Body of pancreas (tissue), 4 donors: ENCODE measurements at regions of chr12 and their contacts with region 1.

Region 1: DNA sequence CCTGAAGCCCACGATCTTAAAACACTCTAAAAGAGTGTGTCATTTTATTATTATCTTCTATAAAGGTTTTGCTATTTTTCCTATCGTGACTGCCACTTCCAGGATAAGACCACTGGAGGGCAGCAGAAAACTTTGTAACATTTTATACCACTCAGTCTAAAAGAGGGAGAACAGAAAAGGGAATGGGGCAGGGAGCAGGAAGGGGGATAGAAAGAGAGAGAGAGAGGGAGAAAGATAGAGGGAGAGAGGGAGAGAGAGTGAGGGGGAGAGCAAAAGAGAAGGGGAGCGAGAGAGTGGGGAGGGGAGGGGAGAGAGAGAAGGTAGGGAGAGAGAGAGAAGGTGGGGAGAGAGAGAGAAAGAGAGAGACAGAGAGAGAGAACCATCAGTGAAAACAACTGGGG is 2.0 kb upstream of the ART4 start:
- DNase-seq: peak; percentile 59 to 75 (median 68)
- ATAC-seq: peak; percentile 63
- H3K4me3 ChIP-seq: no peak overlapping the region
- H3K27ac ChIP-seq: peak overlapping the region in 2 of 4 donors; percentile 39 to 71
- H3K4me1 ChIP-seq: peaks cover 63% of the 10 kb centered on the region
- H3K27me3 ChIP-seq: no peaks in the 10 kb centered on the region
- CTCF ChIP-seq: peak; percentile 61 to 94 (median 83)
- POLR2A ChIP-seq: no peak

Region 2: DNA sequence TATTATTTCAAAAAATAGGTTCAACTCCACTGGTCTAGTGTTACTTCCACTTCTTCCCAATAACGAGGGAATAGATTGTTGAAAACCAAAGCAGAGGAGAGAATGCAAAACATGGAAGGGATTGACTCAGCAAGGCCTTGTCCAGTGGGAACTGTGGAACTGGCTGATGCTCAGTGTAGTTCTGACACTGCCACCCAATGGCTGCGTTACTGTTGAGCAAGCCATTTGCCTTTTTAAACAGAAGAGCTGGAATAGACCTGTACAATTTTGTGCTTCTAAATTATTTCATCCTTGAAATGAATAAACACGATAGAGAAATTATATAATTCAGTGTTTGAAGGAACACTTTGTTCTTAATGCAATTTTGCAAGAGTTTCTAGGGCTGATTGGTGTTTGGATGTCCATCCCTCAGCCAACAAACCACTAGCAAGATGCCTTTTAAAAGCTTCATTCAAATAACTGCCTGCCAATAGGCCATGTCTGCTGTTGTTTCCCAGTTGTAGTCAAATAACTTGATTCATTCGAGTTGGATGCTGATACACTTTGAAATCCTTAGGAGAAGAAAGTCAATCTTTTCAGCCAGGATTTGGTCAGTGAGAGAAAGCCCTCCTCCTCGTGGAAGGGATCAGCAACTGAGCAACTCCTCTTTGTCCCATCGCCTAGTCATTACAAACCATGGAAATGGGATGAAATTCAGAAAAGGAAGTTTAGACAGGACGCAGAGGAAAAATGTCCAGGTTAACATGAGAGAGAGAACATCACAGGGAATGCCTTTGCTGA is 47.6 kb after region 1 on chr12:
- intact Hi-C with region 1: no loop called
- DNase-seq: peak; percentile 22 to 52 (median 38)
- ATAC-seq: peak; percentile 53
- H3K4me3 ChIP-seq: no peak overlapping the region
- H3K27ac ChIP-seq: peak overlapping the region in 3 of 4 donors; percentile 38 to 56 (median 51)
- H3K4me1 ChIP-seq: peaks cover 10% of the 10 kb centered on the region
- H3K27me3 ChIP-seq: no peaks in the 10 kb centered on the region
- CTCF ChIP-seq: no peak
- POLR2A ChIP-seq: no peak

Region 3: DNA sequence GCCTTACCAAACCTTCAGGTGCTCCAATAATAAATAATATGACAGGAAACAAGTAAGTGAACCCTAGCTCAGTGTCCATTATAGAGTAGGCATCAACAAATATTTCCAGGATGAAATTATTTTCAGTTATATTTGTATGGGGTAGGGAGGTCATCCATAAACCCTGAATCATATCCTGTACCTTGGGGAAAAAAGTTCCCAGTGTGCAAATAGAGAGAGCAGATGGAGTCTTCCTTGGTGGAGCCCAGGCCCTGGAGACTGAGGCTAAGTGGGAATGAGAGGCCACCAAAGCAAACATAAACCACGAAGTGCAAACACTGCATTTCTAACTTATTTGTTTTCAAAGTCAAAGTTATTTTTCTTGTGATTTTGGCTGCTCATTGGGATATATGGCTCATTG is 101.5 kb after region 1 on chr12:
- intact Hi-C with region 1: no loop called
- DNase-seq: no peak
- ATAC-seq: no peak
- H3K4me3 ChIP-seq: no peak overlapping the region
- H3K27ac ChIP-seq: no peak overlapping the region
- H3K4me1 ChIP-seq: peaks cover 28% of the 10 kb centered on the region
- H3K27me3 ChIP-seq: no peaks in the 10 kb centered on the region
- CTCF ChIP-seq: no peak
- POLR2A ChIP-seq: no peak

Region 4: DNA sequence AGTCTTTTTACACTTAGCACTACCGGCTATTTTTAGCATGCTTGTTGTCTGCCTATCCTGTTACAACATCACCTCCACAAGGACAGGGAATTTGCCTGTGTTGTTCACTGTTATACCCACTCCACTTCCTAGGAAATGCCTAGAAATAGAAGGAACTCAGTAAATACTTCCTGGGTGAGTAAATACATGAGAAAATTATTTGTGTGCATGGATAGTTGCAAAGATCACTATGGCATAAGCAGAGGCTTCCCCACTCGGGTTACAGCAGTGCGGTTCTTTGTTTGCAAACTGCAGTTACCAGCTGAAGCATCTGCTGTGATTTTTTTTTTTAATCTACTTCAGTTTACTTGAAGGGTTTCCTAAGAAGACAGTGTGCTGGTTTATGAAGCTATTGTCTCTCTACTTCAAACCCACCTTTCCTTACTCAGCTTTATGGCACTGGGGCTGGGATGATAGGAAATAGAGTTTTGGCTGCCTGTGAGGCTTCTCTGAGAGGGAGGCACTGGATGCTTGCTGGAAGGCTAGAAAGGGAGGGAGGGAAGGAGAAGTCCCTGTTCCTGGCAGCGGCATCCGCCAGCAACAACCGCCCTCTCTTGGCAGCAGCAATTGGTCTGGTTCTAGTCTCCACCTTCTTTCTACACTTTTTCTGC is 156.5 kb after region 1 on chr12:
- intact Hi-C with region 1: loop called (anchors 5 kb)
- DNase-seq: peak in 2 of 4 donors; percentile 15 to 19
- ATAC-seq: no peak
- H3K4me3 ChIP-seq: no peak overlapping the region
- H3K27ac ChIP-seq: no peak overlapping the region
- H3K4me1 ChIP-seq: peaks cover 6% of the 10 kb centered on the region
- H3K27me3 ChIP-seq: no peaks in the 10 kb centered on the region
- CTCF ChIP-seq: no peak
- POLR2A ChIP-seq: no peak